ENCODE measurements at regions of chr14 and their contacts with region 1.

Region 1: GRCh38 chr14:23006544-23007419 is 3.2 kb downstream of the C14orf93 start:
- DNase-seq: peak; percentile 98
- ATAC-seq: peak; percentile 98
- H3K4me3 Mint-ChIP-seq: peak overlapping the region; percentile 95
- H3K27ac Mint-ChIP-seq: peak overlapping the region; percentile 99
- H3K4me1 Mint-ChIP-seq: peaks cover 45% of the 10 kb centered on the region
- H3K27me3 Mint-ChIP-seq: no peaks in the 10 kb centered on the region

Region 2: GRCh38 chr14:22929104-22929847 is 77.5 kb before region 1 on chr14 and contains the start of gene PRMT5:
- CTCF ChIA-PET with region 1: interaction called, 12 read pairs
- POLR2A ChIA-PET with region 1: interaction called, 7 read pairs
- intact Hi-C with region 1: loop called in 1 of 2 experiments (anchors 1 kb)
- DNase-seq: peak; percentile 99
- ATAC-seq: peak; percentile 98
- H3K4me3 Mint-ChIP-seq: no peak within 1 kb of the TSS
- H3K27ac Mint-ChIP-seq: no peak within 1 kb of the TSS
- H3K4me1 Mint-ChIP-seq: peaks cover 39% of the 10 kb centered on the region
- H3K27me3 Mint-ChIP-seq: no peaks in the 10 kb centered on the region
- total RNA-seq, gene PRMT5: 121 to 151 TPM

Region 3: DNA sequence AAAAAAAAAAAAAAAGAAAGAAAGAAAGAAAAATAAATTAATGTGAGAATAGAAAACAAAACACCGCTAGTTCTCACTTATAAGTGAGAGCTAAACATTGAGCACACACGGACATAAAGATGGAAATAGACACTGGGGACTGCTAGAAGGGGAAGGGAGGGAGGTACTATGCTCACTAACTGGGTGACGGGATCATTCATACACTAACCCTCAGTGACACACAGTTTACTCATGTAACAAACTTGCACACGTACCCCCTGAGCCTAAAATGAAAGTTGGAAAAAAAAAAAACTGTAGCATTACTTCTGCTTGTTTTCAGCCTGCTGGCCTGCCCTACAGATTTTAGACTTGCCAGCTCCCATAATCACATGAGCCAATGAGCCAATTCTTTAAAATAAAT is 67.1 kb before region 1 on chr14:
- CTCF ChIA-PET with region 1: no interaction called
- POLR2A ChIA-PET with region 1: no interaction called
- intact Hi-C with region 1: no loop called
- DNase-seq: no peak
- ATAC-seq: no peak
- H3K4me3 Mint-ChIP-seq: no peak overlapping the region
- H3K27ac Mint-ChIP-seq: no peak overlapping the region
- H3K4me1 Mint-ChIP-seq: no peaks in the 10 kb centered on the region
- H3K27me3 Mint-ChIP-seq: no peaks in the 10 kb centered on the region

Region 4: DNA sequence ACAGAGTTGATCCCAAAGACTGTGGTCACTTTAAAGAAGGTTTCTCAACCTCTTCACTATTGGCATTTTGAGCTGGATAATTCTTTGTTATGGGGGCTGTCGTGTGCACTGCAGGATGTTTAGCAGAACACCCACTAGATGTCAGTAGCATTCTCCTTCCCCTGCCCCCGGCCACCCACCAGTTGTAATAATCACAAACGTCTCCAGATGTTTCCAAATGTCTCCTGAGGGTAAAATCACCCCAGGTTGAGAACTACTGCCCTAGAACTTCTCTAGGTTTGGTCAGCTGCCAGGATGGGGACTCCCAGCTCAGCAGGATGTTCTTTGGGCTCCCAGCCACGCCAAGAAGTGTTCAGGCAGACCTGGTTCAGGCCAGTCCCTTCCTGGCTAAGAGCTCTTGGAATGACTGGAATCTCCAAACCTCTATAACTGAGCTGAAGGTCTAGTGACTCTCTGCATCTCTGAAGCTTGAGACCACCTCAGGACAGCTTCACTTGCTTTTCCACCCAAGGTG is 12.0 kb before region 1 on chr14:
- CTCF ChIA-PET with region 1: interaction called, 50 read pairs
- POLR2A ChIA-PET with region 1: interaction called, 7 read pairs
- intact Hi-C with region 1: no loop called
- DNase-seq: peak; percentile 59
- ATAC-seq: peak; percentile 78
- H3K4me3 Mint-ChIP-seq: no peak overlapping the region
- H3K27ac Mint-ChIP-seq: no peak overlapping the region
- H3K4me1 Mint-ChIP-seq: no peaks in the 10 kb centered on the region
- H3K27me3 Mint-ChIP-seq: no peaks in the 10 kb centered on the region

Region 5: DNA sequence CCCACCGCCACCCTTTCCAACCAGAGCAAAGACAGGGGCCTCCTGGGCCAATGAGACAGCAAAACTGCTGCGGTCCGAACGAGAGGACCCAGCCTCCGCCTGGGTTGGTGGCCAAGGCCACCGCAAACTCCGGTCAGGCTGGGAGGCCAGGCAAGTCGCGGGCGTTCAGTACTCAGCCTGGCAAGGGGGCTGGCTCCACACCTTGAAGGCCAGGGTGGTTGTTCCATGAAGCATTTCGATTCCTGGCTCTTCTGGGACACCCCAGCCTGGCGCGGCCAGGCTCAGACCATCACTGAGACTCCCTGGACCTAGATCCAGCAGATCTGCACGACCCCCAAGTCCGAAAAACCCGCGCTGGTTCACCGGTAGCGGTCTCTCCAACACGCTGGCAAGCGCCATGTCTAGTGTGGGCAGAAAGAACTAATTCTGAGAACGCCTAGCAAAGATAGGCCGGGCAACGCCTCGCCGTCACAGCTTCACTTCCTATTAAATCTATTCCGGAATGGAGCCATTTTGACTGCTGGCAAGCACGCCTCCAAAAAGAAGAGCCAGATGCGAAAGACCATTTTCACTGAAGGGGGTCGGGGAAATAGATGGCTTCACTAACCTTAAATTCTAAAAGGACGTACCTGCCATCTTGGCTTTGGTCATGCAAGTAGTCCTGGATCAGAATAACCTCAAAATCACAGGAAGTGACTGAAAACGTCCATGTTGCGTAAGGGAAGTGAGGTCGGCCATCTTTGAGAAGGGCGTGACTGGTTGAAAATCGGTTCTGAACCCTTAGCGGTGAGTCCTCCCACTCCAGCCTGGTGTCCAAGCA is 27.9 kb after region 1 on chr14 and contains the start of gene PSMB5:
- CTCF ChIA-PET with region 1: interaction called, 20 read pairs
- POLR2A ChIA-PET with region 1: interaction called, 14 read pairs
- intact Hi-C with region 1: loop called (anchors 1 kb)
- DNase-seq: peak; percentile 94
- ATAC-seq: peak; percentile 95
- H3K4me3 Mint-ChIP-seq: peak within 1 kb of the TSS; percentile 97
- H3K27ac Mint-ChIP-seq: peak within 1 kb of the TSS; percentile 97
- H3K4me1 Mint-ChIP-seq: peaks cover 36% of the 10 kb centered on the region
- H3K27me3 Mint-ChIP-seq: no peaks in the 10 kb centered on the region
- total RNA-seq, gene PSMB5: 104 to 129 TPM

Region 6: DNA sequence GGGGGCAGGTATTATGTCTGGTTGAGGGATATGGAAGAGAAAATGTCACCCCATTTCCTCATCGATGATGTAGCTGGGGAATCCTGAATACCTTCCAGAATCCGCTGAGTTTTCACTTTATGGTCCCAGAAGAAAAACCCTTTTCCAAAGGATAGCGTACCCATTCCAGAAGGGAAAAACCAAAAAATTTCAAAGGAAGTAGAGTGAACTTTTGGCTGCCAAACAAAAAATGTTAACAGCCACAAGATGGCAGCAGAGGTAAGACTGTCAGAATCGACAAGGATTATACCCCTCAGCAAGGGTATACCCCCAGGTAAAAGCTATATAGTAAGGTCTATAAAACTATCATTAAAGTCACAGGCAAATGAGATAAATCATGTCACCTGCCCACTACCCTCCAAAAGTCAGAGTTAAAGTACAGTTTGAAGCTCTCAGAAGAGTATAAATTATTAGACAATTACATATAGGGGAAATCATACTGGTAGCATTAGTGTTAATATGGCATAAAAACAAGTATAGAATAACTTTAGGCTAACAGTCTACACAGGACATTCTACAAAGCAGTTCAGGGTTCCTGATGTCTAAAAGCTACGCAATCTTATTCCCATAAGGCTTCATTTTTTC is 70.1 kb after region 1 on chr14:
- CTCF ChIA-PET with region 1: interaction called, 11 read pairs
- POLR2A ChIA-PET with region 1: no interaction called
- intact Hi-C with region 1: no loop called
- DNase-seq: peak; percentile 46
- ATAC-seq: peak; percentile 59
- H3K4me3 Mint-ChIP-seq: no peak overlapping the region
- H3K27ac Mint-ChIP-seq: peak overlapping the region; percentile 17
- H3K4me1 Mint-ChIP-seq: peaks cover 5% of the 10 kb centered on the region
- H3K27me3 Mint-ChIP-seq: no peaks in the 10 kb centered on the region

Measured in activated CD4-positive, alpha-beta T cell treated with anti-CD3 and anti-CD28 coated beads for 36 hours (primary cell).